ENCODE measurements at regions of chr4 and their contacts with region 1.

Region 1: GRCh38 chr4:102868781-102869568 is at the start of gene CISD2:
- DNase-seq: peak; percentile 83 to 97 (median 91)
- ATAC-seq: peak; percentile 81
- H3K4me3 ChIP-seq: peak within 1 kb of the TSS; percentile 74 to 77
- H3K4me3 Mint-ChIP-seq: peak within 1 kb of the TSS; percentile 89
- H3K27ac ChIP-seq: peak within 1 kb of the TSS; percentile 89 to 94
- H3K27ac Mint-ChIP-seq: peak within 1 kb of the TSS; percentile 99
- H3K4me1 ChIP-seq: peaks cover 37% of the 10 kb centered on the region
- H3K4me1 Mint-ChIP-seq: peaks cover 66% of the 10 kb centered on the region
- H3K27me3 ChIP-seq: no peaks in the 10 kb centered on the region
- H3K27me3 Mint-ChIP-seq: no peaks in the 10 kb centered on the region
- CTCF ChIP-seq: no peak
- total RNA-seq, gene CISD2: 14.3 to 14.4 TPM

Region 2: GRCh38 chr4:102627831-102628523 is 241.0 kb before region 1 on chr4:
- CTCF ChIA-PET with region 1: no interaction called
- POLR2A ChIA-PET with region 1: interaction called, 7 read pairs
- intact Hi-C with region 1: loop called in 1 of 2 experiments (anchors 2 kb)
- DNase-seq: no peak
- ATAC-seq: no peak
- H3K4me3 ChIP-seq: no peak overlapping the region
- H3K4me3 Mint-ChIP-seq: no peak overlapping the region
- H3K27ac ChIP-seq: no peak overlapping the region
- H3K27ac Mint-ChIP-seq: peak overlapping the region; percentile 74
- H3K4me1 ChIP-seq: peaks cover 64% of the 10 kb centered on the region
- H3K4me1 Mint-ChIP-seq: peaks cover 77% of the 10 kb centered on the region
- H3K27me3 ChIP-seq: no peaks in the 10 kb centered on the region
- H3K27me3 Mint-ChIP-seq: no peaks in the 10 kb centered on the region
- CTCF ChIP-seq: no peak

Region 3: DNA sequence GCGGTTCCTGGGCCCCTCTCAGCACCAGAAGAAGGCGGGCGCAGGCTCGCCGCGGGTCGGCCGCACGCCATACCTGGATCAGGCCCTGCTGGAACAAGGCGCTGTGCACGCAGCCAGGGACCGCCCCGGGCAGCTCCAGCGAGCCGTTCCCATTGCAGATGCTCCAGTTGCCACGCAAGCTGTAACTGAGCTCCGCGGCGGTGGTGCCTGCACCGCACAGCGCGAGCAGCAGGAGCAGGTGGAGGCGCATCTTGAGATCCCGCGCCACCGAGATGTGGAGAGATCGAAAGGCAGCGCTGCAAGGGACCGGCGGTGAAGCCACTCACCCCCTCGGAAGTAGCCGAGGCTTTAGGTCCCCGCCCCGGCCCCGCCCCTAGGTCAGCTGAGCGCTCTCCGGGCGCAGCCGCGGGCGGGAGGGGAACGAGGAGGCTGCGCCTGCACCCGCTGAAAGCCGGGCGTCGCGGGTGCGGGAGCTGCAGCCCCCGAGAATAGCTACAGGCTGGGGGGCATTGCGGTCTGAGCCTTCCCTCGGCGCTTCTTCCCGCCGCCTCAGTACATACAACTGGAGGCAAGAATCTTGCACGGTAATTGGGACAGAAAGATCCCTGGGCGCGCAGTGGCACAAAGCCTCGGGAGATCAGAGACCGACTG is 108.2 kb before region 1 on chr4 and contains the start of gene MANBA:
- CTCF ChIA-PET with region 1: interaction called, 3 read pairs
- POLR2A ChIA-PET with region 1: interaction called, 15 read pairs
- intact Hi-C with region 1: loop called (anchors 1 to 2 kb)
- DNase-seq: peak; percentile 67 to 90 (median 84)
- ATAC-seq: peak; percentile 83
- H3K4me3 ChIP-seq: peak within 1 kb of the TSS; percentile 88 to 93
- H3K4me3 Mint-ChIP-seq: peak within 1 kb of the TSS; percentile 96
- H3K27ac ChIP-seq: peak within 1 kb of the TSS; percentile 62 to 65
- H3K27ac Mint-ChIP-seq: peak within 1 kb of the TSS; percentile 94
- H3K4me1 ChIP-seq: peaks cover 10% of the 10 kb centered on the region
- H3K4me1 Mint-ChIP-seq: peaks cover 42% of the 10 kb centered on the region
- H3K27me3 ChIP-seq: no peaks in the 10 kb centered on the region
- H3K27me3 Mint-ChIP-seq: no peaks in the 10 kb centered on the region
- CTCF ChIP-seq: no peak
- total RNA-seq, gene MANBA: 22.5 to 24.1 TPM

Region 4: GRCh38 chr4:102815981-102816380 is 53.0 kb before region 1 on chr4:
- CTCF ChIA-PET with region 1: interaction called, 3 read pairs
- POLR2A ChIA-PET with region 1: interaction called, 11 read pairs
- intact Hi-C with region 1: no loop called
- DNase-seq: no peak
- ATAC-seq: no peak
- H3K4me3 ChIP-seq: no peak overlapping the region
- H3K4me3 Mint-ChIP-seq: peak overlapping the region; percentile 48
- H3K27ac ChIP-seq: peak overlapping the region in 1 of 2 experiments; percentile 17
- H3K27ac Mint-ChIP-seq: peak overlapping the region; percentile 87
- H3K4me1 ChIP-seq: peaks cover 97% of the 10 kb centered on the region
- H3K4me1 Mint-ChIP-seq: peaks cover 85% of the 10 kb centered on the region
- H3K27me3 ChIP-seq: no peaks in the 10 kb centered on the region
- H3K27me3 Mint-ChIP-seq: no peaks in the 10 kb centered on the region
- CTCF ChIP-seq: no peak

Region 5: GRCh38 chr4:102901804-102902203 is 32.8 kb after region 1 on chr4:
- CTCF ChIA-PET with region 1: no interaction called
- POLR2A ChIA-PET with region 1: no interaction called
- intact Hi-C with region 1: no loop called
- DNase-seq: no peak
- ATAC-seq: no peak
- H3K4me3 ChIP-seq: no peak overlapping the region
- H3K4me3 Mint-ChIP-seq: no peak overlapping the region
- H3K27ac ChIP-seq: no peak overlapping the region
- H3K27ac Mint-ChIP-seq: no peak overlapping the region
- H3K4me1 ChIP-seq: no peaks in the 10 kb centered on the region
- H3K4me1 Mint-ChIP-seq: no peaks in the 10 kb centered on the region
- H3K27me3 ChIP-seq: no peaks in the 10 kb centered on the region
- H3K27me3 Mint-ChIP-seq: no peaks in the 10 kb centered on the region
- CTCF ChIP-seq: no peak

Measured in CD8-positive, alpha-beta T cell (primary cell).